Thyroid gland (tissue), 4 donors: ENCODE measurements at regions of chr6 and their contacts with region 1.

Region 1: GRCh38 chr6:136582711-136583471 is 32.7 kb upstream of the MAP7 start:
- DNase-seq: no peak
- H3K4me3 ChIP-seq: no peak overlapping the region
- H3K27ac ChIP-seq: peak overlapping the region in 2 of 3 donors; percentile 55 to 62
- H3K4me1 ChIP-seq: peaks cover 0 to 20% of the 10 kb centered on the region in 2 donors
- H3K27me3 ChIP-seq: no peaks in the 10 kb centered on the region
- CTCF ChIP-seq: peak; percentile 5 to 67 (median 42)
- POLR2A ChIP-seq: no peak

Region 2: GRCh38 chr6:136491251-136491650 is 91.6 kb before region 1 on chr6:
- intact Hi-C with region 1: no loop called
- DNase-seq: no peak
- H3K4me3 ChIP-seq: no peak overlapping the region
- H3K27ac ChIP-seq: no peak overlapping the region
- H3K4me1 ChIP-seq: no peaks in the 10 kb centered on the region
- H3K27me3 ChIP-seq: no peaks in the 10 kb centered on the region
- CTCF ChIP-seq: no peak
- POLR2A ChIP-seq: no peak

Region 3: DNA sequence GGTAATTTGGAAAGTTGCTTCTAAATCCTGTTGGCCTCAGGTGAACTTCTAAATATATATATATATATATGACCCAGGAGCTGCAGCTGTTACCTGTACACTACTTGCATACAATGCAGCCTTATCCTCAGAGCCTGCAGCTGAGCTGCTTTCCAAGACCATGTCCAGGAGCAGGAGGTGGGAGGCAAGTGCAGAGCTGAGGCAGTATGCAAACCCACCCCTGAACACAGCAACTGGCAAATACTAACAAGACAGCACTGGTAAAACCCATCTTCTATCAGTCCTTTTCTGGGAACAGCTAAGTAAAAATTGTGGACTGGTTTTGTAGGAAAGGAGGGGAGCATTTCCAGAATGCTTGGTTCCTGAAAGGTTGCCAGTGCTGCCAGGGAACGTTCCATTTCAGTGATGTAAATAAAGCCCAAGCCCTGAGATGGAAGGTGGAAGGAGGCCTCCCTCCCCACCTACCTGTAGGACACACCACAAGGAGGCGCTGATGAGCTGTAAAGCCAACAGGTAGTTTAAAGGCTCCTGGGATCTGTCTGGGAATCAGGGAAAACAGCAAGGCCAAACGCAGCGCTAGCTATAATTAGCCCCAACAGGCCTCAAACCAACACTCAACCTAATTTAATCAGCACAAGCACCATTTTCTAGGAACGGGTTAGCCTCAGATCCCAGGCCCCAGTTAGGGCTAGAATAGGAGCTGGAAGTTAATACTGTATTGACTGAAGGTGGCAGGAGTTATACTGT is 61.1 kb after region 1 on chr6:
- intact Hi-C with region 1: loop called (anchors 10 kb)
- DNase-seq: peak; percentile 95 to 98
- H3K4me3 ChIP-seq: no peak overlapping the region
- H3K27ac ChIP-seq: peak overlapping the region; percentile 33 to 83 (median 66)
- H3K4me1 ChIP-seq: peaks cover 24 to 47% of the 10 kb centered on the region in 2 donors
- H3K27me3 ChIP-seq: no peaks in the 10 kb centered on the region
- CTCF ChIP-seq: peak; percentile 66 to 97 (median 90)
- POLR2A ChIP-seq: no peak

Region 4: DNA sequence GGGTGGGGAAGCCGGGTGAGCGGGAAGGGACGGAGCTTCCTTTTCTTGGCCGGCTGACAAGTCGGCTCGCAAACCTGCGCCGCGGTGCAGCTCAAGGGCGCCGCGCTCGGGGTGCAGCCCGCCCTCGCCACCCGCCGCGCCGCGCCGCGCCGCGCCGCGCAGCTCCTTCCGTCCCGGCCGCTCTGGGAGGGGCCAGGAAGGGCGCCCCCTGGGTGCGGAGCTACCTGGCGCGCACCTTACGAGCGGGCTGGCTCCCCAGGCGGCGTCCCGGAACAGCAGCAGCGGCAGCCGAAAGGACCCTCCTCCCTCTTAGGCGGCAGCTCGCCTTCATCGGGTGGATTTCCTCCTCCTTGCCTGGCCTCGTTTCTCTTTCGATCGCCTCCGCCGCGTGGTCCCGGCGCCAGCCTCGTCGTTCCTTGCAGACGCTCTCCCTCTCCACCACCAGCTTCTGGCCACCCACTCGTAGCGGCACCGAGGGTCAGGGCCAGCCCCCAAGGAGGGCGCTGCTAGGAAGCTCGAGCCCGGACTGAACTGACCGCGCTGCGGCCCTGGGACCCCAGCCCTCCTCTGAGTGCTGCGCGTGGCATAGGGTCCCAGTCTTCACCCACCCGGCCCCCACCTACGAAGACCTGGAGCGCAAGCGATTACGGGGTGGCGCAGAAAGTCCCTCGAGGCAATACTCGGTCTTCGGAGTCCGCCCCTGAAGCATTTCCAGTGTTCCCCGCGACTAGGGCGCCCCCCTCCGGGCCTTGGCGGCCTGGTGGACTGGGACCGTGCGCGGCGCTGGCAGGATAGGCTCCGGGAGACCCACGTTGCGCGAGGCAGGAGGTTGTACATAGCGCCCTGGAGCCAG is 209.7 kb after region 1 on chr6 and contains the start of gene MAP3K5:
- intact Hi-C with region 1: loop called (anchors 5 kb)
- DNase-seq: peak; percentile 93 to 96
- H3K4me3 ChIP-seq: peak within 1 kb of the TSS; percentile 80 to 93 (median 83)
- H3K27ac ChIP-seq: peak within 1 kb of the TSS; percentile 97 to 100 (median 98)
- H3K4me1 ChIP-seq: peaks cover 19 to 29% of the 10 kb centered on the region in 2 donors
- H3K27me3 ChIP-seq: no peaks in the 10 kb centered on the region
- CTCF ChIP-seq: peak; percentile 25 to 92 (median 73)
- POLR2A ChIP-seq: peak in 1 of 2 donors; percentile 84
- total RNA-seq, gene MAP3K5: 28.1 to 68.0 (median 46.5) TPM